Aorta (tissue), 5 donors: ENCODE measurements at regions of chr3 and their contacts with region 1.

Region 1: GRCh38 chr3:124467980-124468902 is 262.0 kb upstream of the UMPS start:
- DNase-seq: peak in 1 of 2 donors; percentile 78
- ATAC-seq: peak; percentile 80
- H3K4me3 ChIP-seq: no peak overlapping the region
- H3K27ac ChIP-seq: peak overlapping the region in 1 of 2 donors; percentile 3
- H3K4me1 ChIP-seq: no peaks in the 10 kb centered on the region
- H3K27me3 ChIP-seq: no peaks in the 10 kb centered on the region

Region 2: GRCh38 chr3:124014366-124014942 is 453.8 kb before region 1 on chr3:
- intact Hi-C with region 1: loop called (anchors 5 to 10 kb)
- DNase-seq: peak in 1 of 2 donors; percentile 61
- ATAC-seq: peak; percentile 40
- H3K4me3 ChIP-seq: no peak overlapping the region
- H3K27ac ChIP-seq: peak overlapping the region; percentile 36 to 85
- H3K4me1 ChIP-seq: peaks cover 6 to 8% of the 10 kb centered on the region in 2 donors
- H3K27me3 ChIP-seq: no peaks in the 10 kb centered on the region

Region 3: DNA sequence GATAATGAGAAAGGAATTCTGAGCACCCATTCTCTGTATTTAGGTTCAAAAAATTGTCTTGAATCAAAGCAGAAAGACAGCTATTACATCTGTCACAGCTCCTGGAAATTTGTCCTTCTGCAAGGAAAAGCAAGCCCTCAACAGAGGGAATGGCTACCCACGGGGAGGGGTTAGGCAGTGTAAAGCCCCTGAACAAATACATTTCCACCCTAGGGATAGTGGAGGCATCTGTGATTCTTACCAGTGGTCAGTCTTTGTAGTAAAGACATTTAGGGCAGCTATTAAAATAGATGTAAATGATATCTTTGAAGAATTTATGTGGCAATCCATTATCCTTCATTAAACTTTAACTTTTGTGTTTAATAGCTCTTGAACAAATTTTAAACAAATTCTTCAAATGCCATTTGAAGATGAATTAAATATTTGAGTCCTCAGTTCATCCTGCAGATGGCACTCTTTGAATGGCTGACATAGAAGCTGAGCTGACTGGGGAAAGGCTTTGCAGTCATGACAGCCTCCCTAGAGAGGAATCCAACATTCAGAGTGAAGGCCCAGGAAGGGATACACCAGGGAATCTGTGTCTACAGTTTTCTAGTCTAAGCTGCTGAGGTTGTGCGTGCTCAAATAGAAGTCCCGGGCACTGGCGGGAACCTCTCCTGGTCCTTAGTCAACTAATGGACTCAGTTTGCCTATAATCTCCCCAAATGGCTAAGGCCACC is 116.7 kb before region 1 on chr3:
- intact Hi-C with region 1: loop called (anchors 2 kb)
- DNase-seq: no peak
- ATAC-seq: peak; percentile 68
- H3K4me3 ChIP-seq: no peak overlapping the region
- H3K27ac ChIP-seq: no peak overlapping the region
- H3K4me1 ChIP-seq: peaks cover 0 to 7% of the 10 kb centered on the region in 2 donors
- H3K27me3 ChIP-seq: no peaks in the 10 kb centered on the region